Activated CD4-positive, alpha-beta memory T cell treated with anti-CD3 and anti-CD28 coated beads, Interleukin-2, amount 10 ng/mL, durations not matched to agents 7 days and 5 days (primary cell): ENCODE measurements at regions of chr13 and their contacts with region 1.

Region 1: DNA sequence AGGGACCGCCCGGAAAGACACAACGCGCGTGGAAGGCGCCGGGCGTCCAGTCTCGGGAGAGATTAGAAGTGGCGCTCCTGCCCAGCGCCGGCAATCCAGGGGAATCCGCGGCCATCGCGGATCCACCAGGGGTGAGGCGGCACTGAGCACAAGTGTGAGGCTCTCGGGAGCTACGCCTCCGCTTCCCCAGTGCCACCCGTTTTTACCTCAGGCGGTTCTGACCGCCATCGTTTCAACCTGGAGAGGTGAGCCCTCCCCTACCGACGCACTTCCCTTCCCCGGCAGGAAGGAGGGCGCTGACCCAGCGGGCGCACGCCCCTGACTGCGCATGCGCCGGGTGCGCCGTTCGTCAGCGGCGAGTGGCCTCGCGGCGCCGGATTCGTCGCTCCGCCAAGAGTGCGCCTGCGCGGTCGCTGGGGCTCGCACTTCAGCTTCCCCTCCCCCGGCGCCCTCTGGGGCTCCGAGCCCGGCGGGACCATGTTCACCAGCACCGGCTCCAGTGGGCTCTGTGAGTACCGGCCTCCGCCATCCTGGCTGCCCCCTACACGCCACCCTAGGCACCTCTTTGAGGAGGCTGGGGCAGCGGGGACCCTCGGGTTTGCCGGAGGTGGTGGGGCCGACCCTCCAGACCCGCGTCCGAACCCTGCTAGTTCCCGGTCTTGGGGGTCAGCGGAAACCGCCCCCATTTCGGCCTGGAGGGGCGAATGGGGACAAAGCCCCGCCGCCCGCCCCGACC is at the start of gene UBAC2:
- DNase-seq: peak; percentile 97
- H3K4me3 Mint-ChIP-seq: peak within 1 kb of the TSS; percentile 93
- H3K27ac Mint-ChIP-seq: peak within 1 kb of the TSS; percentile 80
- H3K4me1 Mint-ChIP-seq: peaks cover 50% of the 10 kb centered on the region
- H3K27me3 Mint-ChIP-seq: peaks cover 6% of the 10 kb centered on the region
- total RNA-seq, gene UBAC2: 53.8 to 55.2 TPM

Region 2: GRCh38 chr13:99053636-99054233 is 146.9 kb before region 1 on chr13:
- CTCF ChIA-PET with region 1: no interaction called
- POLR2A ChIA-PET with region 1: no interaction called
- DNase-seq: no peak
- H3K4me3 Mint-ChIP-seq: no peak overlapping the region
- H3K27ac Mint-ChIP-seq: peak overlapping the region; percentile 74
- H3K4me1 Mint-ChIP-seq: peaks cover 70% of the 10 kb centered on the region
- H3K27me3 Mint-ChIP-seq: no peaks in the 10 kb centered on the region

Region 3: GRCh38 chr13:99087096-99087953 is 113.3 kb before region 1 on chr13:
- CTCF ChIA-PET with region 1: no interaction called
- POLR2A ChIA-PET with region 1: interaction called, 18 read pairs
- DNase-seq: peak; percentile 94
- H3K4me3 Mint-ChIP-seq: peak overlapping the region; percentile 94
- H3K27ac Mint-ChIP-seq: peak overlapping the region; percentile 97
- H3K4me1 Mint-ChIP-seq: peaks cover 33% of the 10 kb centered on the region
- H3K27me3 Mint-ChIP-seq: no peaks in the 10 kb centered on the region

Region 4: GRCh38 chr13:99133230-99133629 is 67.4 kb before region 1 on chr13:
- CTCF ChIA-PET with region 1: no interaction called
- POLR2A ChIA-PET with region 1: no interaction called
- DNase-seq: no peak
- H3K4me3 Mint-ChIP-seq: no peak overlapping the region
- H3K27ac Mint-ChIP-seq: no peak overlapping the region
- H3K4me1 Mint-ChIP-seq: no peaks in the 10 kb centered on the region
- H3K27me3 Mint-ChIP-seq: no peaks in the 10 kb centered on the region

Region 5: GRCh38 chr13:99158846-99159245 is 41.8 kb before region 1 on chr13:
- CTCF ChIA-PET with region 1: no interaction called
- POLR2A ChIA-PET with region 1: no interaction called
- DNase-seq: no peak
- H3K4me3 Mint-ChIP-seq: no peak overlapping the region
- H3K27ac Mint-ChIP-seq: no peak overlapping the region
- H3K4me1 Mint-ChIP-seq: no peaks in the 10 kb centered on the region
- H3K27me3 Mint-ChIP-seq: peaks cover 21% of the 10 kb centered on the region

Region 6: DNA sequence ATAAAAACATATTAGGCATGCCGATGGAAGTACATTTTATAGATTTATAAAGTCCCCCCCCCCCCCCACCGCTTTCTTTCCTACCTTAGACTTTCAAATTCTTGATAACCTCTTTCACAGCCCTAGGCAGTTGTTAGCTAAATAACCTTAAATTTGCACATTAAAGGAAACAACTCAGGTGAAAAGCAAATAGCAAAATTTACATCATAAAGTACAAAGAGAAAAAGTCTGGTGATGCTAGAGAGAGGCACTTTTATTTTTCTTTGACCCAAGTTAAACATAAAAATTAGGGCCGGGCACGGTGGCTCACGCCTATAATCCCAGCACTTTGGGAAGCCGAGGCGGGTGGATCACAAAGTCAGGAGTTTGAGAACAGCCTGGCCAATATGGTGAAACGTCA is 15.0 kb before region 1 on chr13:
- CTCF ChIA-PET with region 1: interaction called, 6 read pairs
- POLR2A ChIA-PET with region 1: interaction called, 14 read pairs
- DNase-seq: no peak
- H3K4me3 Mint-ChIP-seq: no peak overlapping the region
- H3K27ac Mint-ChIP-seq: no peak overlapping the region
- H3K4me1 Mint-ChIP-seq: peaks cover 1% of the 10 kb centered on the region
- H3K27me3 Mint-ChIP-seq: no peaks in the 10 kb centered on the region

Region 7: DNA sequence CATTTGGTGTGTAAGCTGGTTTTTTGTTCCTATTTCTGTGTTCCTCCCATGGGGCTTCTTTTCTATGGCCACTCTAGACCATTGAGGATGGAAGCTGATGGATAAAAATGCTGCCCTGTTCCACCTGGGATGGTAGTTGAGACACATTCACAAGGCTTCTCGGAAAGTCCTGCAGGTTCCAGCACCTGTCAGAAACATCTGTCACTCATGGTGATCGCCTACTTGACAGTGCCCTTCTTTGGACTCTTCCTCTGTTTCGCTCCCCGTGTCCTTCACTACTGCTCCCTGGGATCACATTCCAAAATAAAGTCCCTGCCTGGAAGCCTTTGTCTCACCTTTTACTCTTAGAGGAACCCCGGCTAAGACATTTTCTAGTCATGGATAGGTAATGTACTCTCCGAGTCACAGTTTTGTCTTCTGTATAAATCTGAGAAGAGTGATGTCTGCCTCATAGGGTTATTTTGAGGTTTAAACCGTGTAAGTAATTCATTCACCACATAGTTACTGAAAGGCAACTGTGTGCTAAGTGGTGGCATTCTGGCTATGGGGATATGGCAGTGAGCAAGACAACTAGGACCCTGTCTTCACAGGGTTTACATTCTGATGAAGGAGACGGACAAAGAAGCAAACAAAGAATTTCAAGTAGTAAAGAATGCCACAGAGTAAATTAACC is 21.1 kb after region 1 on chr13:
- CTCF ChIA-PET with region 1: interaction called, 15 read pairs
- POLR2A ChIA-PET with region 1: interaction called, 45 read pairs
- DNase-seq: no peak
- H3K4me3 Mint-ChIP-seq: no peak overlapping the region
- H3K27ac Mint-ChIP-seq: no peak overlapping the region
- H3K4me1 Mint-ChIP-seq: peaks cover 87% of the 10 kb centered on the region
- H3K27me3 Mint-ChIP-seq: no peaks in the 10 kb centered on the region

Region 8: GRCh38 chr13:99237981-99238662 is 37.5 kb after region 1 on chr13:
- CTCF ChIA-PET with region 1: interaction called, 6 read pairs
- POLR2A ChIA-PET with region 1: interaction called, 42 read pairs
- DNase-seq: no peak
- H3K4me3 Mint-ChIP-seq: peak overlapping the region; percentile 71
- H3K27ac Mint-ChIP-seq: peak overlapping the region; percentile 81
- H3K4me1 Mint-ChIP-seq: peaks cover 24% of the 10 kb centered on the region
- H3K27me3 Mint-ChIP-seq: no peaks in the 10 kb centered on the region

Region 9: GRCh38 chr13:99258210-99258860 is 57.7 kb after region 1 on chr13 and contains the start of gene GPR18:
- CTCF ChIA-PET with region 1: interaction called, 179 read pairs
- POLR2A ChIA-PET with region 1: interaction called, 99 read pairs
- DNase-seq: peak; percentile 48
- H3K4me3 Mint-ChIP-seq: peak within 1 kb of the TSS; percentile 78
- H3K27ac Mint-ChIP-seq: peak within 1 kb of the TSS; percentile 91
- H3K4me1 Mint-ChIP-seq: peaks cover 54% of the 10 kb centered on the region
- H3K27me3 Mint-ChIP-seq: no peaks in the 10 kb centered on the region
- total RNA-seq, gene GPR18: 10.3 to 10.4 TPM

Region 10: DNA sequence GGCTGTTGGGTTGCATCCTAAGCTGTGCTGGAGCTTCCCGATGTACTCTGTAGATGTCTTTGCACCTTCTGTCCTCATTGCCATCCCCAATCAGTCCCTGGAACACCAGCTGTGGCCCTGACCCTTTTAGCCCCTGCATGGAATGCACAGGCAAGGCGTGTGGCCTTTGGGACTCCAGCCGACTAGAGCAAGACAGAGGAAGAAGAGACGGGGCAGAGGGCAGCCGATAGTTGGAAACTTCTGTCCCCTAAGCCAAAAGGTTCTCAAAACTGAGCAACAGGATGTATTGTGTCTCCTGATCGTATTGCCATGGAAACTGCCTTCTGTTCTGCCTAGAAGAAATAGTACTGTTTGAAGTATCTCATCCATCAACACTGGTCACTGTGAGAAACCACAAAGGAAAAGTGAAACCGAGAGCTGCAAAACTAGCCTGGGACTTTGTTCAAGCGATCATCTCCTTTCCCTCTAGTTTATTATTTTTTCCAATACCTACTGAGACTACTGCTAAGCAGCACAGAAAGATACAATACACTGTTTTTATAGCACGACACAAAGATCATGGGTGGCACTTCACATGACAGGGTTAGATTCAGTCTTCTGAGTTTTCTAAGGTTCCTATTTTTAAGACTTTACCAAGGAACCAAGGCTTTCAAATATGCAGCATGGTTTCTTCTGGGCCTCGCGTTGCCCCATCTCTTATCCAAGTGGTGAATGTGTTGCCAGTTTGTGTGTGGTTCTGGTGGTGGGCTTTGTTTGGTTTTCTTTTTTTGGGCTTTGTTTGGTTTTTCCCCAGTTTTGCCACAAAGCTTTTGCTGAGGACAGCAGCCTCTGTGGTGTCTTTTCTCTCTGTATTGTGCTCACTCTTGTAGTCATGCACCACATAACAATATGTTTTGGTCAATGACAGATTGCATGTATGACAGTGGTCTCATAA is 155.8 kb after region 1 on chr13:
- CTCF ChIA-PET with region 1: no interaction called
- POLR2A ChIA-PET with region 1: interaction called, 10 read pairs
- DNase-seq: peak; percentile 67
- H3K4me3 Mint-ChIP-seq: peak overlapping the region; percentile 56
- H3K27ac Mint-ChIP-seq: peak overlapping the region; percentile 96
- H3K4me1 Mint-ChIP-seq: peaks cover 99% of the 10 kb centered on the region
- H3K27me3 Mint-ChIP-seq: no peaks in the 10 kb centered on the region